Left cardiac atrium (tissue), 4 donors: ENCODE measurements at regions of chr5 and their contacts with region 1.

Region 1: DNA sequence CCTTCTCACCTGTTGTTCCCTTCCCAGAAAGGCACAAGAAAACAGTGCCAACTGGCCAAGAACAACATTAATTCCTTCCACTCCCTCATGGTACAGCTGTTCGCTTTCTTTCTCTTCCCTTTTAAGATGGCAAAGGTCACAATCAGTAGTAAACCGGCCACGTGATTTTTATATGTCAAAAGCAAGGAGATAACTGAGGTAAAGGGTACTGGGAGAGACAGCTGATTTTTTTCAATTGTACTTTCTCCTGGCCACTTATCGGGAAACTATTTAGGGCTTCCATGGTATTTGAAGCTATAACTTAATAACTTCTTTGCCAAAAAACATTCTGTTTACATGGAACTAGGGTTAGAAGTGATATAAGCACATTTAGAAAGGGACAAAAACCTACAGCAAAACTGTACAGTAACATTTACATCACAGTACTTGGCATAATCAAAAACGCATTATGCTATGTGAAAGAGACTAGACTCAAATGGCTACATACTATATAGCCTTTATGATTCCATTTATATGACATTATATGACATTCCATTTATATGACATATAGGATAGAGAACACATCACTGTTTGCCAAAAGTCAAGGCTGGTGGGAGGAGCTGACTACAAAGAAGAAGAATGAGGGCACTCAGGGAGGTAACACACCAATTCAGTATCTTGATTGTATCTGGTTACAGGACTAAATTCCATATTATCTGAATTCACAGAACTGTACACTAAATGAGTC is 24.8 kb downstream of the PLPP1 start:
- DNase-seq: no peak
- ATAC-seq: peak; percentile 45 to 73

Region 2: GRCh38 chr5:55176176-55176818 is 333.7 kb before region 1 on chr5:
- intact Hi-C with region 1: no loop called
- DNase-seq: no peak
- ATAC-seq: peak; percentile 46 to 60

Region 3: DNA sequence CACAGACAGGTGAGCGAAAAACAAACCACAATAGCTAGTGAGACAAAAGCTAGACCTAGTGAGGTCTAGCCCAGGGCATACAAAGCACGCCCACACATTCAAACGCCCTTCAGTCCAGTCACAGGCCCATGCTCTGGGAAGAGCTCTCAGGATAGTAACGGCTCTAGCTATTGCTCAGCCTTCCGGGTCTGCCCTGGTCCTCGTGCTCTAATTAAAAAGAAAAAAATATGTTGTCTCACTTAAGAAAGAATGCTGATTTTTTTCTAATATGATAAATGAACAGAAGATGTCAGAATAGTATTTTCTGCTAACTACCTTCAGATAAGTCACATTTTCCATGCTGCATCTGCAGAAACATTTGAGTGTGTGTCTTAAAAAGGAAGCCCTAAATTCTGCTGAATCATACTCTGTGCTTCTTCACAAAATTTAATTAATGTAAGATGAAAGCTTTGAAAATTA is 69.7 kb before region 1 on chr5:
- intact Hi-C with region 1: loop called in 1 of 2 experiments (anchors 10 kb)
- DNase-seq: no peak
- ATAC-seq: peak; percentile 37 to 40

Region 4: DNA sequence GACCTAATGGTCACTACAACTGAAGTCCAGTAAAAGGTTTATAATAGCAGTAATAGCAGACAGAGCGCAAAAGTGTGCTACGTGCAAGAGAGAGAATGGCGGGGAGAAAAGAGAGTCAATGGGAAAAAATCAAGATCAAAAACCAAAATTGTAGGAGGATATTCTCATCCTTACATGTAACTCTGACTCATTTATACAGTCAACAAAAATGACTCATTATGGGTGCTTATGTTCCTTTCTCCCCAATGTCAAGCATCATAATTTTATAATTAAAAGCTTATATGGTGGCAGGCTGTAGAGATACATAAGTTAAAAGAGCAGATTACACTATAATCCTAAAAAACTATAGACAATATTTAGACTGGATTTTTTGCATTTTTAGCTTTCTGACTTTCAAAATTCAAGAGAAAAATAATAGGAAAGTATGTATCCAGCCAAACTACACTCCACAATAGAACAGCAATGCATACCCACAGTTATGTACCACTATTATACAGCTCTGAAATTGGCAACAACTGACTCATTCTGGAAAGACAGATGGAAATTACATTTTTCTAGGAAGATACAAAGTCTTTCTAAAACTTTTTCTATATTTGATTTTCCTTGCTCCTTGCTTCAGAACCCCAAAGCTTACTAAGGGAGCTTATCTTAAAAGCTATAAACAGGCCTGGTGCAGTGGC is 53.6 kb before region 1 on chr5:
- intact Hi-C with region 1: no loop called
- DNase-seq: no peak
- ATAC-seq: no peak

Region 5: DNA sequence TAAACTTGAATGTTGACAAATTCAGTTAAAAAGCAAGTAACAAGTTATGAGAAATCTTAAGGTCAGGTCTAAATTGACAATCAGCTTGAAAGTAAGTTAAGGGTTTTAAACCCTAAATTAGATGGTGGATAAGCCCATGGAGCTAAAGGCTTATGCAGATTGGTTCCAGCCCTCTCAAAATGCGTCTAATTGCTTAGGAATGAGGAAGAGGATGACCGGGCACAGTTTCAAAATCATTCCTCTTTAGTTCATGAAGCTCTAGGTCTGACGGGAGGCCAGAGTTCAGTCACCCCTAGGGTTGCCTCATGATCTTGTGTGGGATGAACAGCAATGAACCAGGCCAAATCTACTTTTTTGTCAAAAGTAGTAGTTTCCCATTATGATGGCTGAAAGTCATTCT is 126.7 kb after region 1 on chr5:
- intact Hi-C with region 1: no loop called
- DNase-seq: no peak
- ATAC-seq: peak; percentile 45 to 74